AG04449 (cell line): ENCODE measurements at regions of chr14 and their contacts with region 1.

Region 1: GRCh38 chr14:39174560-39175444 is at the start of gene PNN:
- DNase-seq: peak; percentile 98
- H3K4me3 ChIP-seq: peak within 1 kb of the TSS; percentile 88
- CTCF ChIP-seq: no peak

Region 2: GRCh38 chr14:39266871-39267591 is 92.2 kb after region 1 on chr14:
- CTCF ChIA-PET with region 1: no interaction called
- POLR2A ChIA-PET with region 1: interaction called, 15 read pairs
- DNase-seq: no peak
- H3K4me3 ChIP-seq: peak overlapping the region; percentile 90
- CTCF ChIP-seq: no peak

Region 3: DNA sequence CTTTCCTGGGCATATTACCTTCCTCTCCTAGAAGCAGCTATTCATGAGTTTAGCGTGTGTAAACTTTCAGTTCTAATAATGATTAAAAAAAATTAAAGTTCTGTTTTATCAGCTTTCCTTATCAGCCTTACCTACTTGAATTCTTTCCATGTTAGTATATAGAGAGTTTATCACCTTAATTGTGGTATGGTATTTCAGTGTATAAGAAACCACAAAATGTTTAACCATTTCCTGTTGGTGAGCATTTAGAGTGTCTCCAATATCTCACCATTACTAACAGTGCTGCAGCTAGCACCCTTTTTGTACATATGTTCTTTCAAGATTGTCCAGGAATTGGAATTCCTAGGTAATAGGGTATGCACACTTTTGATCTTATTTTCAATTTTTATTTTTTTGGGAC is 168.0 kb after region 1 on chr14:
- CTCF ChIA-PET with region 1: no interaction called
- POLR2A ChIA-PET with region 1: no interaction called
- DNase-seq: no peak
- H3K4me3 ChIP-seq: no peak overlapping the region
- CTCF ChIP-seq: no peak

Region 4: DNA sequence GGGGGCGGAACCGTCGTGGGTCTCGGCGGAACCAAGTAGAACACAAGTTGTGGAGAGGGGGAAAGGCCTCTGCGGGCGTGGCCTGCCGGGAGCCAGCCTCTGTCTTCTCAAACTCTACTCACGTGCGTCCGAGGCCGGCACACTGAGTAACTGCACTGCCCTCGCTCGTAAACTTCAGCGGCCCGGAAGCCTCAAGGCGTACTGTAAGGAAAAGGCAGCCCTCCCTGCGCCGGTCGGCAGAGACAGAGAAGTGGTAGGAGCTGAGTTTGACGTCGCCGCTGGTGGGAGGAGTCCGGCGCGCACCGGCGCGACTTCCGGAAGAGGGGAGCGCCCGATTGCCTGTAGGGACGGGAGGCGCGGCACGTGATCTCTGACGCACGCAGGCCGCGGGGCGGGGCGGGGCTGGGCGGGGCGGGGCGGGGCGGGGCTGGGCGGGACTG is 257.4 kb after region 1 on chr14 and contains the start of gene FBXO33:
- CTCF ChIA-PET with region 1: no interaction called
- POLR2A ChIA-PET with region 1: interaction called, 19 read pairs
- DNase-seq: peak; percentile 74
- H3K4me3 ChIP-seq: peak within 1 kb of the TSS; percentile 89
- CTCF ChIP-seq: no peak